Activated T-helper 1 cell treated with anti-CD3 and anti-CD28 coated beads, Interleukin-12 subunit alpha, Interleukin-12 subunit beta, Interleukin-2, Interleukin-4 antibody, amounts not matched to agents 30 ng/mL and 10 ng/mL and 1 ng/mL, durations not matched to agents 14 hours and 24 hours and 36 hours (primary cell): ENCODE measurements at regions of chr2 and their contacts with region 1.

Region 1: DNA sequence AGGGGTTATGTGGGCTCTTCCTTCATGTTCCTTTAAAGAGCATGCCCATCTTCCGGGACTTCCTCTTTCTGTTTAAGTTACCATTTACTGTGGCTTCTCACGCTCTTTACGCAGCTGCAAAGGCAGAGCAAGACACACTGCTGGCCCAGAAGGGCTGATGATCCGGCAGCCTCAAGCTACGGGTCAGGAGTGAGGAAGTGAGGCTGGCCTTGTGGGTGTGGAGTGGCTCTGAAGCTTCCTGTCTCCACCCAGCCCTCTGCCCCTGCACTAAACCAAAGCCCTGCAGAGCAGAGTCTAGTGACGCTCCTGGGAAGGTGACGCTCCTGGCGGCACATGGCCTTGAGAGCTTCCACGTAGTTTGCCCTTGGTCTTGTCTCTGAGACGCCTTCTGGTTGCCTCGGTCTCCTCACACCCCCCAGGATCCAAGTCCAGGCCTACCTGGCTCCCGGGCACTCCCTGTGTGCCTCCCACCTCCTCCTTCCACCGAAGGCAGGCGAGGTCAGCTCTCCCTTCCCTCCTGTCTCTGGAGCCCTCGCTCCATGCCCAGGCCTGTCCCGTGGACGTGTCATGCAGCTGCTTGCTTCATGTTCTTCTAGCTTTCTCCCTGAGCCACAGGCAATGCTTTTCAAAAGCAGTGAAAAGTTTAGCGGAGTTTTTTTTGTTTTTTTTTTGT is 50.3 kb downstream of the ARL4C start:
- DNase-seq: peak; percentile 87
- H3K4me3 Mint-ChIP-seq: peak overlapping the region; percentile 75
- H3K27ac Mint-ChIP-seq: peak overlapping the region; percentile 99
- H3K4me1 Mint-ChIP-seq: peaks cover 88% of the 10 kb centered on the region
- H3K27me3 Mint-ChIP-seq: no peaks in the 10 kb centered on the region

Region 2: GRCh38 chr2:234425619-234426603 is 20.6 kb before region 1 on chr2:
- intact Hi-C with region 1: loop called (anchors 1 kb)
- DNase-seq: peak; percentile 75
- H3K4me3 Mint-ChIP-seq: peak overlapping the region; percentile 75
- H3K27ac Mint-ChIP-seq: peak overlapping the region; percentile 99
- H3K4me1 Mint-ChIP-seq: peaks cover 77% of the 10 kb centered on the region
- H3K27me3 Mint-ChIP-seq: no peaks in the 10 kb centered on the region

Region 3: GRCh38 chr2:234483568-234484251 is 37.2 kb after region 1 on chr2:
- intact Hi-C with region 1: loop called (anchors 1 kb)
- DNase-seq: peak; percentile 81
- H3K4me3 Mint-ChIP-seq: peak overlapping the region; percentile 34
- H3K27ac Mint-ChIP-seq: peak overlapping the region; percentile 82
- H3K4me1 Mint-ChIP-seq: peaks cover 92% of the 10 kb centered on the region
- H3K27me3 Mint-ChIP-seq: no peaks in the 10 kb centered on the region

Region 4: DNA sequence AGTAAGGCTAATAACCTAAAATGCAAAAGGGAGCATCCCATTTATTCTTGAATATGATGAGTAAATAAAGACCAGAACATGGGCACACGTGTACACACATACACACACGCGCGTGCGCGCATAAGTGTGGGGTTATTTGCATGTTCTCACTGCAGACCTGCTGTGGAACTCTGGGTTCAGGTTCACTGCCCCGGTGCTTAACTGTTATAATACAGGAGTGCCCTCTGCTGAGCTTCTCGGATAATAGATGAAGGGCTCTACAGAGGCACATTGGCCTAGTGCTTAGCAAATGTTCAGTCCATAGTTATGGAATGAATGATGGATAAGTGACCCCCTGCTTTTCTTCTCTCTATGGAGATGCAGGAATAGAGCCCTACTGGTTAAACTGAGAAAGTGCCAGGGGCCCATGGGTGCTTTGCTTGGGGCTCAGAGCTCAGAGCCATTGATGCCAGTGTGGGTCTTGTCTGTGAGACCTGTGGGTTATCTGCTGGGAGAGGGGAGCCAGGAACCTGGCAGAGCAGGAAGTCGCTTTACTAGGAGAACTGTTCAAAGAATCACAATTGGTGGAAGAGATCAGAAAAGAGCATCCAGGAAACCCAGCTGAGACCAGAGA is 54.0 kb after region 1 on chr2:
- intact Hi-C with region 1: loop called (anchors 1 kb)
- DNase-seq: peak; percentile 72
- H3K4me3 Mint-ChIP-seq: peak overlapping the region; percentile 58
- H3K27ac Mint-ChIP-seq: peak overlapping the region; percentile 34
- H3K4me1 Mint-ChIP-seq: peaks cover 32% of the 10 kb centered on the region
- H3K27me3 Mint-ChIP-seq: peaks cover 13% of the 10 kb centered on the region

Region 5: GRCh38 chr2:234981197-234982117 is 534.9 kb after region 1 on chr2:
- intact Hi-C with region 1: no loop called
- DNase-seq: no peak
- H3K4me3 Mint-ChIP-seq: no peak overlapping the region
- H3K27ac Mint-ChIP-seq: no peak overlapping the region
- H3K4me1 Mint-ChIP-seq: no peaks in the 10 kb centered on the region
- H3K27me3 Mint-ChIP-seq: no peaks in the 10 kb centered on the region